Vagina (tissue), 2 donors: ENCODE measurements at regions of chr15 and their contacts with region 1.

Region 1: GRCh38 chr15:28904541-28905315 is 19.0 kb downstream of the APBA2 start:
- DNase-seq: no peak
- H3K4me3 ChIP-seq: no peak overlapping the region
- H3K27ac ChIP-seq: no peak overlapping the region
- H3K4me1 ChIP-seq: no peaks in the 10 kb centered on the region
- H3K27me3 ChIP-seq: no peaks in the 10 kb centered on the region
- CTCF ChIP-seq: no peak
- POLR2A ChIP-seq: no peak

Region 2: DNA sequence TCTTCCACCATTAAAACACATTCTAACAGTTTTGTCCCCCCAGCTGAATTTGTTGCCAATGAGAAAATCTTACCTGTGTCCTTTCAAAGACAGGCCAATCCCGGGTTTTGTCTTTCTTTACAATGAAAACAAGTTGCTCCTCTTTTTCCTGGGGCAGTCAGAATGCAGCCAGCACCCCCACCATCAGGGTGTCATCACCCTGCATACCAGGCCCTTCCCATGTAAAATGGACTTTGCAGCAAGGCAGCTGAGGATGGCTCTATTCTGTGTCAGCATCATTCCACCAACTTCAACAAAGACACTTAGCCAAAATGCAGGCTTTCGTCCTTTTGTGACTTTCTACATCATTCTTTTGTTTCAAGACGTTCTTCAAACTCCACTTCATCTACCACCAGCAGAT is 1296.5 kb before region 1 on chr15:
- intact Hi-C with region 1: loop called (anchors 5 kb)
- DNase-seq: no peak
- H3K4me3 ChIP-seq: no peak overlapping the region
- H3K27ac ChIP-seq: no peak overlapping the region
- H3K4me1 ChIP-seq: no peaks in the 10 kb centered on the region
- H3K27me3 ChIP-seq: no peaks in the 10 kb centered on the region
- CTCF ChIP-seq: no peak
- POLR2A ChIP-seq: no peak

Region 3: GRCh38 chr15:28873541-28874190 is 31.1 kb before region 1 on chr15:
- intact Hi-C with region 1: no loop called
- DNase-seq: no peak
- H3K4me3 ChIP-seq: no peak overlapping the region
- H3K27ac ChIP-seq: no peak overlapping the region
- H3K4me1 ChIP-seq: no peaks in the 10 kb centered on the region
- H3K27me3 ChIP-seq: no peaks in the 10 kb centered on the region
- CTCF ChIP-seq: no peak
- POLR2A ChIP-seq: no peak